ENCODE measurements at regions of chr9 and their contacts with region 1.

Region 1: GRCh38 chr9:126261584-126262356 is 64.9 kb upstream of the MVB12B start:
- DNase-seq: no peak
- ATAC-seq: no peak
- H3K4me3 ChIP-seq: no peak overlapping the region
- H3K27ac ChIP-seq: no peak overlapping the region
- H3K4me1 ChIP-seq: no peaks in the 10 kb centered on the region
- H3K27me3 ChIP-seq: no peaks in the 10 kb centered on the region
- CTCF ChIP-seq: no peak
- POLR2A ChIP-seq: no peak
- RAD21 ChIP-seq: no peak

Region 2: DNA sequence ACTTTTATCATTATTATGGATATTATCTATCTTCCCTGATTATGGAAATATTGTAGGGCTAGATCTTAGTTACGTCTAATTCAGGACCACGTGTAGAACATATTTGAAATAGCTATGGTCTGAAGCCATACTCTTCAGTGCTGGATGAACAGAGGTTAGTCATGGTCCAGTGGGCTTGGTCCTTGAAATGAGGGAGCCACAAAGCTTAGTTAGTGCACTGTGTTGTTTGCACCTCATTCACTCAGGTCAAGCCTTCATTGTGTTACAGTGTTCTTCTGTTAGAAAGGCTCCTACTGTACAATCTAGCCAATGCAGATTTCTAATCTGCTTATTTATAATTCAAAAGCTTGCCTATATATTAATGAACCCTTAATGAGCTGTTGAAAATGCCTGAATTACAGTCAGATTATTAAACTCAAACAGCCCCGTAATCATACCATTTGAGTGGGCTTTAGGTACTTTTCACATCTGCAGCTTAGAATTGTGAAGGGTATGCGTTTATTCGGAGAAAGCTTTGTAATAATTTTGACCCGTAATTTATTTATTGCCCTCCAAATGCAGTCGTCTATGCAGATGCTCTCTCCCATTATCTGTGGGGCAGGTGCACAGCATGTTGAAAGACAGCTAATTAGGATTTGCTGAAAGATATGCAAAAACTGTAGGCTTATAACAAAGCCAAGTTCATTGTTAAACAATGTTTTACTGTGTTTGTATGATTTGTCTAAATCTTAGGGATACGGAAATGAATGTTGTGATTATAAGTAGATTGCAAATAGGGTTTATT is 349.7 kb before region 1 on chr9:
- CTCF ChIA-PET with region 1: no interaction called
- POLR2A ChIA-PET with region 1: no interaction called
- RAD21 ChIA-PET with region 1: no interaction called
- intact Hi-C with region 1: no loop called
- DNase-seq: no peak
- ATAC-seq: no peak
- H3K4me3 ChIP-seq: no peak overlapping the region
- H3K27ac ChIP-seq: no peak overlapping the region
- H3K4me1 ChIP-seq: no peaks in the 10 kb centered on the region
- H3K27me3 ChIP-seq: no peaks in the 10 kb centered on the region
- CTCF ChIP-seq: no peak
- POLR2A ChIP-seq: no peak
- RAD21 ChIP-seq: no peak

Region 3: GRCh38 chr9:126357074-126357473 is 95.3 kb after region 1 on chr9:
- CTCF ChIA-PET with region 1: no interaction called
- POLR2A ChIA-PET with region 1: no interaction called
- RAD21 ChIA-PET with region 1: no interaction called
- intact Hi-C with region 1: loop called (anchors 5 kb)
- DNase-seq: no peak
- ATAC-seq: no peak
- H3K4me3 ChIP-seq: no peak overlapping the region
- H3K27ac ChIP-seq: no peak overlapping the region
- H3K4me1 ChIP-seq: no peaks in the 10 kb centered on the region
- H3K27me3 ChIP-seq: no peaks in the 10 kb centered on the region
- CTCF ChIP-seq: no peak
- POLR2A ChIP-seq: no peak
- RAD21 ChIP-seq: no peak

Region 4: DNA sequence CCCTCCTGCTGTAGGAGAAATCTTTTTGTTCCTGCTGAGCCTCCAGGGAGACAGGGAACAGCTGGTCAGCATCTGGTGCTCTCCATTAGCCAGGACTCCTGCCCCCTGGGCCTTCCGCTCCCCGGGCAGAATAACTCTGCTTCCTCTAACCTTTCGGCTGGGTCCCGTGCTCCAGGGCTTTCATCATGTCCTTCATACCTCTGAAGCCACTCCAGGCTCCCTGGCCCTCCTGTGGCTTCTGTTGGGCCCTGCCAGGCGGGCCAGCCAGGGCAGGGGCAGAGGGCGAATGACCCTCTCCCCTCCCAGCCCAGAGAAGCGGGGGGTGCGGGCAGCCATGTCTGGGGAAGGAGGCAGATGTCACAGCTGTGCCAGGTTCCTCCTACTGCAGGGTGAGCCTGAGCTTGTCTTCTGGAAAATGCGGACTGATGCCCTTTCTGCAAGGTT is 270.3 kb after region 1 on chr9:
- CTCF ChIA-PET with region 1: no interaction called
- POLR2A ChIA-PET with region 1: no interaction called
- RAD21 ChIA-PET with region 1: no interaction called
- intact Hi-C with region 1: no loop called
- DNase-seq: no peak
- ATAC-seq: no peak
- H3K4me3 ChIP-seq: no peak overlapping the region
- H3K27ac ChIP-seq: no peak overlapping the region
- H3K4me1 ChIP-seq: no peaks in the 10 kb centered on the region
- H3K27me3 ChIP-seq: no peaks in the 10 kb centered on the region
- CTCF ChIP-seq: no peak
- POLR2A ChIP-seq: no peak
- RAD21 ChIP-seq: no peak

Measured in HCT116 (cell line).